B cell (primary cell): ENCODE measurements at regions of chr19 and their contacts with region 1.

Region 1: DNA sequence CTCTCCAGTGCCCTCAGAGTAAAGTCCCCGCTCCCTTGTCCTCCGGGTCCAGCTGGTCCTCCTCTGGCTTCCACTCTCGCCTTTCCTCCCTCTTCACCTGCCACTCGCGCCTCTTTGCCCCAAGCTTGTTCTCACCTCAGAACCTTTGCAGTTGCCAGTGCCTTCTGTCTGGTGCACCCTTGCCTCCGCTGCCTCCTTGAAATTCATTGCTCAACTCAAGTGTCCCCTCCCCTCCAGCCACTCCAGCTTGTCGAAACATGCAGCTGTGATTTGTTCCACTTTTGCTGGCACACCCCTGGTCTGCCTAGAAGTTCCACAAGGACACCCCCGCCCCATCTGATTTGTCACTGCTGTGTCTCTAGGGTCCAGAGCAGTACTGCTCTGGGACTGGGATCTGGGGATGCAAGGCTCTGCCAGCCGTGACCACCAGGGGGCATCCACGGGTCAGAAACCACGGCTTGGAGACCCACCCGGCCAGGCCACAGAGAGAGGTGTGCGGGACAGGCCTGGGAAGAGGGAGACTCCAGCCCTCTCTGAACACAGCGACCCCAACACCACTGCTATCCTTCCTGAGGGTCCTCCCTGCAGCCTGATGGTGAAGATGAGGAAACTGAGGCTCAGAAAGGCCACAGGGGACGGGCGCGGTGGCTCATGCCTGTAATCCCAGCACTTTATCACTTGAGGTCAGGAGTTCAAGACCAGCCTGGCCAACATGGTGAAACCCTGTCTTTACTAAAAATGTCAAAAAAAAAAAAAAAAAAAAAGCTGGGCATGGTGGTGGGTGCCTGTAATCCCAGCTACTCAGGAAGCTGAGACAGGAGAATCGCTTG is 49.9 kb downstream of the AP1M1 start:
- DNase-seq: peak; percentile 88
- ATAC-seq: peak; percentile 88
- H3K4me3 ChIP-seq: no peak overlapping the region
- H3K4me3 Mint-ChIP-seq: peak overlapping the region; percentile 59
- H3K27ac ChIP-seq: peak overlapping the region; percentile 4 to 66
- H3K27ac Mint-ChIP-seq: peak overlapping the region; percentile 88
- H3K4me1 ChIP-seq: peaks cover 34 to 60% of the 10 kb centered on the region in 2 donors
- H3K4me1 Mint-ChIP-seq: peaks cover 34% of the 10 kb centered on the region
- H3K27me3 ChIP-seq: no peaks in the 10 kb centered on the region
- H3K27me3 Mint-ChIP-seq: no peaks in the 10 kb centered on the region
- CTCF ChIP-seq: peak; percentile 87

Region 2: DNA sequence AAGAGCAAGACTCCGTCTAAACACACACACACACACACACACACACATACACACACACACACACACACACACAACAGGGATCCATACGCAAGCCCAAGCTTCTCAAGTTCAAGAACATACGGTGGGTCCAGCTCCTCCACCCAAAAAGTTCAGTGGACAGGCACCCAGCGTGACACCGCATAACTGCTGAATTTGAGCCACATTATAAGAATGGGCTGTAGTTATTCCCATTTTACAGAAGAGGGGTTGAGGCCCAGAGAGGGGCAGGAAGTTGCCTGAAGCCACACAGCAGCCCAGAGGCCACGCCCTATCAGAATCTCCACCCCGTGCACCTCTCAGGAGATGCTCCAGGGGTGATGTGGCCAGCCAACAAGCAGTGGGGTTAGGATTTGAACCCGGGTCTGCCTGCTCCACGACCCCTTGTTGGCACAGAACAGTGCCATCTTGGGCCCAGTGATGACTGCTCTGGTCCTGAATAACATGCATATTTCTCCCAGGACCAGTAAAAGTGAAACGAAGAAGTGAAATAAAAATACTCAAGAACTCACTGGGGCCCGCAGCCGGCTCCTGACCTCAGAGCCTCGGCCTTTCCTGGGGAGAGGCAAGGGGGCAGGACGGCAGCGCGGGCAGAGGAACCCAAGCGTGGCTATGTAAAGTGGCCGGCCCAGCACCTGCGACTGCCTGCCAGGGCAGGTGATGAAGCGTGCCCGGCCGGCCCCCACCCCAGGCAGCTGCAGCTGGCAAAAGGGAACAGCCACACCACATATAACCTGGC is 12.0 kb after region 1 on chr19:
- CTCF ChIA-PET with region 1: interaction called, 47 read pairs
- POLR2A ChIA-PET with region 1: interaction called, 4 read pairs
- intact Hi-C with region 1: loop called (anchors 1 kb)
- DNase-seq: peak; percentile 94
- ATAC-seq: peak; percentile 79
- H3K4me3 ChIP-seq: peak overlapping the region in 1 of 5 experiments; percentile 42
- H3K4me3 Mint-ChIP-seq: peak overlapping the region; percentile 78
- H3K27ac ChIP-seq: peak overlapping the region; percentile 87 to 89
- H3K27ac Mint-ChIP-seq: peak overlapping the region; percentile 95
- H3K4me1 ChIP-seq: peaks cover 75 to 94% of the 10 kb centered on the region in 2 donors
- H3K4me1 Mint-ChIP-seq: peaks cover 83% of the 10 kb centered on the region
- H3K27me3 ChIP-seq: no peaks in the 10 kb centered on the region
- H3K27me3 Mint-ChIP-seq: no peaks in the 10 kb centered on the region
- CTCF ChIP-seq: no peak

Region 3: GRCh38 chr19:16293118-16294091 is 45.8 kb after region 1 on chr19:
- CTCF ChIA-PET with region 1: no interaction called
- POLR2A ChIA-PET with region 1: no interaction called
- intact Hi-C with region 1: no loop called
- DNase-seq: no peak
- ATAC-seq: no peak
- H3K4me3 ChIP-seq: no peak overlapping the region
- H3K4me3 Mint-ChIP-seq: no peak overlapping the region
- H3K27ac ChIP-seq: no peak overlapping the region
- H3K27ac Mint-ChIP-seq: no peak overlapping the region
- H3K4me1 ChIP-seq: no peaks in the 10 kb centered on the region
- H3K4me1 Mint-ChIP-seq: peaks cover 1% of the 10 kb centered on the region
- H3K27me3 ChIP-seq: peaks cover 0 to 3% (median 0%) of the 10 kb centered on the region in 4 experiments
- H3K27me3 Mint-ChIP-seq: no peaks in the 10 kb centered on the region
- CTCF ChIP-seq: no peak

Region 4: DNA sequence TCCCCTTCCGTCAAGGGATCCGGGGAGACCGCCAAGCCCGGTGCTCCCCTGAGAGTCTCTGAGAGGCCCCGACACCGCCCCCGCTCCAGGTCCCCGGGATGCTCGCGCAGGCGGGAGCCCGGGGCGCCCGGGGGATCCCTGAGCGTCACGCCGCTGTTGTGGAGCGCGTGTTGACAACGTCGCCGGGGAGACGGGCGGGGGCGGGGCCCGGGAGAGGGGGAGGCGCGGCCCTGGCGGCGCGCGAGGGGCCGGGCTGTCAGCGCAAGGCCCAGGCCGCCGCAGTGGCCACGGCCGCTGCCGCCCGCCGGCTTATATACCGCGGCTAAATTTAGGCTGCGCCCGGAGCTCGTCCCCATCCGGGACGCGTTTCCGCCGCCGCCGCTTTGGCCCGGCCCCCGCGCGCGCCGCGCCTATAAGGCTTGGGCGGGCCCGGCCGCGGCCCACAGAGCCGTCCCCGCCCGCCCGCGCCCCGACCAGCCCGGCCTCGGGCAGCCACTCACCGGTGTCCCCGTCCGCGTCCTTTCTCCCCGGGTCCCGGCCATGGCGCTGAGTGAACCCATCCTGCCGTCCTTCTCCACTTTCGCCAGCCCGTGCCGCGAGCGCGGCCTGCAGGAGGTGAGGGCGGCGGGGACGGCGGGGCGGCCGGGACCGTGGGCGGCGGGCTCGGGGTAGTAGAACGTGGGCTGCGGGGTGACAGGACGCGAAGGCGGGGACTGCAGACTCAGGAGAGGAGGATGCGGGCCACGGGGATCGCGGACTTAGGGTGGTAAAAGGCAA is 77.0 kb after region 1 on chr19 and contains the start of gene KLF2:
- CTCF ChIA-PET with region 1: interaction called, 101 read pairs
- POLR2A ChIA-PET with region 1: interaction called, 58 read pairs
- intact Hi-C with region 1: loop called (anchors 1 kb)
- DNase-seq: peak; percentile 99
- ATAC-seq: peak; percentile 59
- H3K4me3 ChIP-seq: peak within 1 kb of the TSS; percentile 35 to 100 (median 98)
- H3K4me3 Mint-ChIP-seq: peak within 1 kb of the TSS; percentile 76
- H3K27ac ChIP-seq: peak within 1 kb of the TSS; percentile 99
- H3K27ac Mint-ChIP-seq: peak within 1 kb of the TSS; percentile 91
- H3K4me1 ChIP-seq: peaks cover 42 to 55% of the 10 kb centered on the region in 2 donors
- H3K4me1 Mint-ChIP-seq: peaks cover 61% of the 10 kb centered on the region
- H3K27me3 ChIP-seq: no peaks in the 10 kb centered on the region
- H3K27me3 Mint-ChIP-seq: no peaks in the 10 kb centered on the region
- CTCF ChIP-seq: no peak
- total RNA-seq, gene KLF2: 241 and 242 TPM in 2 replicates

Region 5: GRCh38 chr19:16338470-16339360 is 91.1 kb after region 1 on chr19:
- CTCF ChIA-PET with region 1: interaction called, 15 read pairs
- POLR2A ChIA-PET with region 1: interaction called, 4 read pairs
- intact Hi-C with region 1: no loop called
- DNase-seq: peak; percentile 64
- ATAC-seq: no peak
- H3K4me3 ChIP-seq: peak overlapping the region in 4 of 5 experiments; percentile 10 to 49 (median 29)
- H3K4me3 Mint-ChIP-seq: peak overlapping the region; percentile 83
- H3K27ac ChIP-seq: peak overlapping the region; percentile 27 to 39
- H3K27ac Mint-ChIP-seq: peak overlapping the region; percentile 87
- H3K4me1 ChIP-seq: peaks cover 53 to 71% of the 10 kb centered on the region in 2 donors
- H3K4me1 Mint-ChIP-seq: peaks cover 61% of the 10 kb centered on the region
- H3K27me3 ChIP-seq: no peaks in the 10 kb centered on the region
- H3K27me3 Mint-ChIP-seq: no peaks in the 10 kb centered on the region
- CTCF ChIP-seq: peak; percentile 14

Region 6: DNA sequence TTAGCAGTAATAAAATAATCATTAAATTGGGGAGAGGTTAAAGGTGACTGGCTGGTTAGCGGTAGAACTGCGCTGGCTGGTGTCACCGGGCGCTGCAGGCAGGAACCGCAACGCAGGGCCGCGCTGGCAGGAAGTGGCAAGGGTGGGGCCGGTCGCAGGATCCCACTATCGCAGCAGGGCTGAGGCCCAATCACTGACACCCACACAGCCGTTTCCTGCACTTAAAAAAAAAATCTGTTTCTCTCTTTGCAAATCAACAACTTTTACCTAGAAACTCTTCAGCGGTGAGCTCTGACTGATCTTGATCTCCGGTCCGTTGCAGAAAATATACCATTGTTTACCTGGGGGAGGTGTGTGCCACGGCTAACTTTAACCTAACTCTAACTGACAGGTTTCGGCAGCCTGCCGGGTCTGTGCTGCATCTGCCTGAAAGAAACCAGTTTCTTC is 124.0 kb after region 1 on chr19:
- CTCF ChIA-PET with region 1: interaction called, 25 read pairs
- POLR2A ChIA-PET with region 1: interaction called, 8 read pairs
- intact Hi-C with region 1: no loop called
- DNase-seq: peak; percentile 93
- ATAC-seq: peak; percentile 73
- H3K4me3 ChIP-seq: peak overlapping the region; percentile 15 to 47 (median 19)
- H3K4me3 Mint-ChIP-seq: no peak overlapping the region
- H3K27ac ChIP-seq: peak overlapping the region; percentile 85 to 94
- H3K27ac Mint-ChIP-seq: no peak overlapping the region
- H3K4me1 ChIP-seq: peaks cover 94 to 100% of the 10 kb centered on the region in 2 donors
- H3K4me1 Mint-ChIP-seq: peaks cover 38% of the 10 kb centered on the region
- H3K27me3 ChIP-seq: no peaks in the 10 kb centered on the region
- H3K27me3 Mint-ChIP-seq: no peaks in the 10 kb centered on the region
- CTCF ChIP-seq: peak; percentile 27

Region 7: DNA sequence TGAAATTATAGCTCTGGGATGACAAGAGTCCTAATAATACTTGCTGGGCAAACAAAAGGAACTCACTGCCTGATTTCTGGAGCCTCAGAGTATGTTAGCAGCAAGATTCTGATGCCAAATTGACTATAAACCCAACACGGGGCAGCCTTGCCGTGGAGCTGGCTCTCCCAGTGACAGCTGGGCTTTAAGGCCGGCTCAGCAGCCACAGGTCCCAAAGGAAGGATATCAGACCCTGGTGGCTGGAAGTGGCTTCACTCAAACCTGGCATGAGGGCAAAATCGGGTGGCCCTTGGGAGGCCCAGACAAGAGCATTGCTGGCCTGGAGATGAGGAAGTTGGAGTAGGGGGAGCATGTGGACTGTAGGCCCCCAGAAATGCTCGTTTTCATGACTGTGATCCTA is 176.3 kb after region 1 on chr19:
- CTCF ChIA-PET with region 1: interaction called, 168 read pairs
- POLR2A ChIA-PET with region 1: interaction called, 29 read pairs
- intact Hi-C with region 1: no loop called
- DNase-seq: no peak
- ATAC-seq: no peak
- H3K4me3 ChIP-seq: no peak overlapping the region
- H3K4me3 Mint-ChIP-seq: no peak overlapping the region
- H3K27ac ChIP-seq: no peak overlapping the region
- H3K27ac Mint-ChIP-seq: no peak overlapping the region
- H3K4me1 ChIP-seq: peaks cover 0 to 3% of the 10 kb centered on the region in 2 donors
- H3K4me1 Mint-ChIP-seq: peaks cover 3% of the 10 kb centered on the region
- H3K27me3 ChIP-seq: no peaks in the 10 kb centered on the region
- H3K27me3 Mint-ChIP-seq: no peaks in the 10 kb centered on the region
- CTCF ChIP-seq: no peak